MCF 10A (cell line): ENCODE measurements at regions of chr17 and their contacts with region 1.

Region 1: GRCh38 chr17:8997994-8998628 is 23.2 kb upstream of the NTN1 start:
- DNase-seq: peak; percentile 60
- H3K4me3 Mint-ChIP-seq: no peak overlapping the region
- H3K27ac Mint-ChIP-seq: no peak overlapping the region
- H3K4me1 Mint-ChIP-seq: peaks cover 5% of the 10 kb centered on the region
- H3K27me3 Mint-ChIP-seq: no peaks in the 10 kb centered on the region
- CTCF ChIP-seq: peak; percentile 83

Region 2: DNA sequence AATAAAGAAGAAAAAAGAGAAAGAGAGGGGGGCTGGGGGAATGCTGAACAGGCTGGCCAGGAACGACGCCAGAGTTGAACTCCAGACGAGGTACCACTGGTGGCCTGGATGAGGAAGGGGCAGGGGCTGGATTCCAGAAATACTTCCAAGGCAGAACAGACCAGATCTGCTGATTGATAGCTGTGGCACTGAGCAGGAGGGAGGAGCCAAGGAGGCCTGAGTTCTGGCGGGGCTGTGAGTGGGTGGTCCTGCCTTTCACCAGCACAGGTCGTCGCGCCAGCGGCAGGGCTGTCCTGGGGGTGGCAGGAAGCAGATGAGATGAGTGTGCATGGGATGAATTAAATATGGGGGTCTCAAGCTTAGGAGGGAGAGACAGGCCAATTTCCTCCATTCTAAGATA is 259.0 kb before region 1 on chr17:
- CTCF ChIA-PET with region 1: no interaction called
- POLR2A ChIA-PET with region 1: no interaction called
- intact Hi-C with region 1: no loop called
- DNase-seq: no peak
- H3K4me3 Mint-ChIP-seq: no peak overlapping the region
- H3K27ac Mint-ChIP-seq: no peak overlapping the region
- H3K4me1 Mint-ChIP-seq: no peaks in the 10 kb centered on the region
- H3K27me3 Mint-ChIP-seq: peaks cover 40% of the 10 kb centered on the region
- CTCF ChIP-seq: no peak

Region 3: DNA sequence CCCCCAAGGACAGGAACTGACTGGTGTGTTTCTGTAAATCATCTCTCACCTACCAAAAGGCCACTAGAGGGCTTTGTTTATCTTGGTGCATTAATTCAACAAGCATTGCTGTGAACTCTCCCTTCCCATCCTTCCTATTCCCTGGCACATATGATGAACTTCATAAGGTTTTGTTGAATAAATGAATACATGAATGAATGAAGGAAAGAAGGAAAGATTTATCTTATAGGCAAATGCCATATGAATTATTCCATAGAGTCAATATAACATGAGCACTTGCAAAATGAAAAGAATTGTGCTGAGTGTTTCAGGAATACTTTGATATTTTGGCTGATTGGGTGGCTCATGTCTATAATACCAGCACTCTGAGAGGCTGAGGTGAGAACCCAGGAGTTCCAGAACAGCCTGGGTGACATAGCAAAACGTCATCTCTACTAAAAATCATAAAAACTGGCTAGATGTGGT is 244.1 kb before region 1 on chr17:
- CTCF ChIA-PET with region 1: no interaction called
- POLR2A ChIA-PET with region 1: no interaction called
- intact Hi-C with region 1: loop called (anchors 5 kb)
- DNase-seq: peak; percentile 36
- H3K4me3 Mint-ChIP-seq: no peak overlapping the region
- H3K27ac Mint-ChIP-seq: no peak overlapping the region
- H3K4me1 Mint-ChIP-seq: no peaks in the 10 kb centered on the region
- H3K27me3 Mint-ChIP-seq: peaks cover 60% of the 10 kb centered on the region
- CTCF ChIP-seq: peak; percentile 22

Region 4: DNA sequence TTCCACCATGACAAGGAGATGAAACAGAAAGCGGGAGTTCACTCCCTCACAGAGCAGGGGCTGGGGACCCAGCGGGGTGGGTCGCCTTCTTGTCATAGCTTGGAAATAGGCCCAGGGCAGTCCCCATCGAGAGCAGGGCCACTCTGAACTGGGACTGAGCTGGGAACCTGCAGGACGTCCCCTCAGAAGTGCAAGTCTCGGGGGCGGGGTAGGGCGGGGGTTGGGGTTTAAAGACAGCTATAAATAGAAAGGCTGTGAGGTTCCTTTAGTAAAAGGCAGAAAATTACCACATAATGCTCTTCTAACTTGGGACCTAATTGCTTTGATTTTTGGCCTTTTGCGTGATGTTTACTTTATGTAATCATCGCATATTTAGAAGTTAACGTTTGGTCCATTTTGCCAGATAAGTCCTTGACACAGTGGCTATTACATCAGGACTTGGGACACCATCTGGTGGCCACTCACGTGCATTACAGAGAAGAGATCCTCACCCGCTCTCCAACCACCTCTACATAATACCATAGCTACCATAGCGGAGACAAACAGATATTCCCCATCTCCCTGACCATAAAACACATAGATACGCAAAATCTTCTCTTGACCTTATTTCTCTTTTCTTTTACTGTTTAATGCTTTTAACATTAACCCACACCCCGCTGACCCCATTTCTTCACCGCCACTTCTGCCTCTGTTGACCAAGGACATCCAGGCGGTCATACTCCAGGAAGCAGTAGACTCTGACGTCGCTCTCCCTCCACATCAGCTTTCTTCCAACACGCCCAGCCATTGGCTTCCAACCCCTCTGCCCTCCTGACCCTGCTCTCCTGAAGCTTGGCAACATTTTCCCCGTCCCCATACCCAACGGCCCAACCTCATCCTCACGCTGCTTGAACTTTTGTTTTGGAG is 103.2 kb before region 1 on chr17:
- CTCF ChIA-PET with region 1: interaction called, 4 read pairs
- POLR2A ChIA-PET with region 1: no interaction called
- intact Hi-C with region 1: loop called (anchors 5 kb)
- DNase-seq: peak; percentile 60
- H3K4me3 Mint-ChIP-seq: no peak overlapping the region
- H3K27ac Mint-ChIP-seq: no peak overlapping the region
- H3K4me1 Mint-ChIP-seq: no peaks in the 10 kb centered on the region
- H3K27me3 Mint-ChIP-seq: peaks cover 10% of the 10 kb centered on the region
- CTCF ChIP-seq: peak; percentile 53

Region 5: DNA sequence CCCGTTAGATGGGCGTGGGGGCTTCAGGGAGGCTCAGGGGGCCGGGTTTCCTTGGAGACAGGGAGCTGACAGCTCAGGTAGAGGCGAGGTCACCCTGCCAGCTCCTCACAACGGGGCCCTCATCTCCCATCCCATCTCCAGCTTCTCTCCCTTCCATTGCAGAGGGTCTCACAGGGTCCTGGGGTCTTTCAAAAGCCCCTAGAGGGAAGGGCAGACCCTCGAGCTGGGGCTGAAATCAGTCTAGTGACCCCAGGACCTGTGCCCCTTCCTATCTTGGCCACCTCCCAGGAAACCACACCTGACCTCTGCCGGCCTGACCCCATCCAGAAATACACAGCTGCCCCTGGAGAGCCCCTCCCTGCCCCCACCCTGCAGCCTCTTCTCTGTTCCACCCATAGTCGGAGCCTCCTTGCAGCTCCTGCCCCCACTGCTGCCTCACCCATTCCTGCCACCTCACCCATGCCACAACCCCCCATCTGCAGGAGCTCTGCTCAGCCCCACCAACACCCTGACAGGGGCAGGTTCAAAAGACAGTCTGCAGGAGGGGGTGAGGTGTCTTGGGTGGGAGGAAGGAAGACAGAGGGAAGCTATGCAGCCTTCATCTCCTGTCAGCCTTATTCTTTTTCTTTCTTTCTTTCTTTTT is 56.0 kb before region 1 on chr17:
- CTCF ChIA-PET with region 1: no interaction called
- POLR2A ChIA-PET with region 1: no interaction called
- intact Hi-C with region 1: no loop called
- DNase-seq: no peak
- H3K4me3 Mint-ChIP-seq: no peak overlapping the region
- H3K27ac Mint-ChIP-seq: no peak overlapping the region
- H3K4me1 Mint-ChIP-seq: no peaks in the 10 kb centered on the region
- H3K27me3 Mint-ChIP-seq: no peaks in the 10 kb centered on the region
- CTCF ChIP-seq: no peak

Region 6: GRCh38 chr17:8985054-8985701 is 12.9 kb before region 1 on chr17:
- CTCF ChIA-PET with region 1: interaction called, 10 read pairs
- POLR2A ChIA-PET with region 1: no interaction called
- intact Hi-C with region 1: no loop called
- DNase-seq: no peak
- H3K4me3 Mint-ChIP-seq: no peak overlapping the region
- H3K27ac Mint-ChIP-seq: no peak overlapping the region
- H3K4me1 Mint-ChIP-seq: no peaks in the 10 kb centered on the region
- H3K27me3 Mint-ChIP-seq: no peaks in the 10 kb centered on the region
- CTCF ChIP-seq: no peak

Region 7: GRCh38 chr17:9009096-9009495 is 11.0 kb after region 1 on chr17:
- CTCF ChIA-PET with region 1: interaction called, 11 read pairs
- POLR2A ChIA-PET with region 1: no interaction called
- intact Hi-C with region 1: no loop called
- DNase-seq: no peak
- H3K4me3 Mint-ChIP-seq: no peak overlapping the region
- H3K27ac Mint-ChIP-seq: no peak overlapping the region
- H3K4me1 Mint-ChIP-seq: no peaks in the 10 kb centered on the region
- H3K27me3 Mint-ChIP-seq: peaks cover 8% of the 10 kb centered on the region
- CTCF ChIP-seq: no peak

Region 8: DNA sequence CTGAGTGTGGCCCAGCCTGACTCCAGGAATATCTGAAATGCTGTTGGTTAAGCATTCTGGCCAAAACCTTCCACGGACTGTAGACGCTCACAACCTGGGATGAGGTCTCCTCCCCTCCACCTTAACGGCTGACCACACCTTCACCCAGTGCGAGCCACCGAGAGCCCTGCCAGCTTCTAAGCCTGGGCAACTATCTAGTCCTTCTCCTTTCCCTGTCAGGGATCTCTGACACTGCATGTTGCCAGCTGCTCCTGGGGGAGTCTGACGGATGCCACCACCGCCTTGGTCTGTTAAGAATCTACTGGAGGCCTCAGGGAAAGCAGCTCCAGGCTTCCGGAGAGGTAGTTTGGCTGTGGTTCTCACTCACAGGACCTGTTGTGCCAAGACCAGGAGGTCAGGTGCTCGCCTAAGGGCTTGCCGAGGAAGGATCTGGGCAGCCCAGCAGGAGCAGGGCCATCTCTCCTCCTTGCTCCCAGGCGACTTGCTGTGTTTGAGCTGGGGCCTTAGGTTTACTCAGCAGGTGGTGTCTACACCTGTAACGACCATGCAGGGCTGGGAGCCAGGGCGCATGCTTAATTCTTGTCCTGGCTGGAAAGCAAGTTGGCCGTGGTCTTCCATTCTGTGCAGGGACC is 134.9 kb after region 1 on chr17:
- CTCF ChIA-PET with region 1: no interaction called
- POLR2A ChIA-PET with region 1: no interaction called
- intact Hi-C with region 1: no loop called
- DNase-seq: no peak
- H3K4me3 Mint-ChIP-seq: no peak overlapping the region
- H3K27ac Mint-ChIP-seq: no peak overlapping the region
- H3K4me1 Mint-ChIP-seq: no peaks in the 10 kb centered on the region
- H3K27me3 Mint-ChIP-seq: no peaks in the 10 kb centered on the region
- CTCF ChIP-seq: no peak

Region 9: GRCh38 chr17:9291912-9292560 is 293.9 kb after region 1 on chr17:
- CTCF ChIA-PET with region 1: interaction called, 13 read pairs
- POLR2A ChIA-PET with region 1: no interaction called
- intact Hi-C with region 1: loop called (anchors 2 kb)
- DNase-seq: peak; percentile 20
- H3K4me3 Mint-ChIP-seq: no peak overlapping the region
- H3K27ac Mint-ChIP-seq: no peak overlapping the region
- H3K4me1 Mint-ChIP-seq: peaks cover 8% of the 10 kb centered on the region
- H3K27me3 Mint-ChIP-seq: no peaks in the 10 kb centered on the region
- CTCF ChIP-seq: peak; percentile 34

Region 10: GRCh38 chr17:9522074-9522473 is 524.0 kb after region 1 on chr17:
- CTCF ChIA-PET with region 1: interaction called, 55 read pairs
- POLR2A ChIA-PET with region 1: interaction called, 3 read pairs
- intact Hi-C with region 1: loop called (anchors 1 kb)
- DNase-seq: peak; percentile 48
- H3K4me3 Mint-ChIP-seq: no peak overlapping the region
- H3K27ac Mint-ChIP-seq: no peak overlapping the region
- H3K4me1 Mint-ChIP-seq: no peaks in the 10 kb centered on the region
- H3K27me3 Mint-ChIP-seq: no peaks in the 10 kb centered on the region
- CTCF ChIP-seq: peak; percentile 67